ENCODE measurements at regions of chr4 and their contacts with region 1.

Region 1: DNA sequence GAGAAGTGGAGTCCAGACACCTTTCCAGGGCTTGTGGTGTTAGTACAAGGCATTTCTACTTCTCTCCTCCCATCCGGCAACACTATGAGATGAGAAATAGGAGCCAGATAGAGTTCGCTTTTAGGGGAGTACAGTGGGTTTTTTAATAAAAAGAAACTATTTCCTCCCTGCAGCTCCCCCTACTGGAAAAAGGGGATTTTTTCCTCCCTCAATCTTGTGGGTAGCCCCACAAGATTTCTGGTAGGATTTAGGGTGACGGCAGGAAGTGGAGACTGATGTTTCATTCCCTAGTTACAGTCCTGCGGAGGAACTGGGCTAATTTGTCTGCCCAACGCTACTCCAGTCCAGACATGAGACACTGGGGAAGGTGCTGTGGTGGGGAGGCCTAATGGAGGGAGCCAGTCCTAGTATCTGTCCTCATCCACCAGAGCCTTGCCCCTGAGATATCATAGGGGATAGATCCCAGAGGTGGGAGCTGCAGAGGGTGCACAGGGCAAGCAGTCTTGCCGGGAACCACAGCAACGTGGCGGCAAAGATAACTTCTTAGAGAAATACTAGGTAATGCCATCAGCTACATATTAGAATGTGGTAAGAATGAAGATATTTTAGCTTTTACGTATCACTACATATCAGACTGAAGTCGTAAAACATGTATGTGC is 45.5 kb upstream of the PRKG2 start:
- DNase-seq: peak; percentile 51 to 75 (median 54)
- H3K4me3 ChIP-seq: no peak overlapping the region
- H3K27ac ChIP-seq: peak overlapping the region; percentile 22 to 56
- H3K4me1 ChIP-seq: peaks cover 0 to 47% (median 22%) of the 10 kb centered on the region in 4 experiments
- H3K27me3 ChIP-seq: no peaks in the 10 kb centered on the region

Region 2: GRCh38 chr4:81272671-81273070 is 12.1 kb after region 1 on chr4:
- CTCF ChIA-PET with region 1: interaction called, 15 read pairs
- POLR2A ChIA-PET with region 1: no interaction called
- DNase-seq: no peak
- H3K4me3 ChIP-seq: no peak overlapping the region
- H3K27ac ChIP-seq: no peak overlapping the region
- H3K4me1 ChIP-seq: peaks cover 0 to 4% (median 0%) of the 10 kb centered on the region in 4 experiments
- H3K27me3 ChIP-seq: no peaks in the 10 kb centered on the region

Region 3: DNA sequence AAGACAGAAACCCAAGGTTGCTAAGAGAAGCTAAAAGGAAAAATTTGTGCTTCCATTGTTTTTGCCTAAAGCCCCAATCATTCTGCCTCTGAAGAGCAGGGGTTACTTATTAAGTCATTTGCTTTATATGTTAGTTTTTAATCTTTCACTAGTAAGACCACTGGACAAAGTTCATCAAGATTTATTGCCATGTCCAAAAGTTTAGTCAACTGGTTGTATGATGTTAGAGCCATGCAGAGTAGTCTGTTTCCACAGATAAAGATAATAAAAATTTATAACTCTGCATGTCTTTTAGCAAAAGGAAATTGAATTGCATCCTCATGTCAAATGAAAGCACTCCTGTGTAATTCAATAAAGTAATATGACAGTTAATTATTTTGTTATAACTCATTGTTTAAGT is 30.2 kb after region 1 on chr4:
- CTCF ChIA-PET with region 1: no interaction called
- POLR2A ChIA-PET with region 1: no interaction called
- DNase-seq: no peak
- H3K4me3 ChIP-seq: no peak overlapping the region
- H3K27ac ChIP-seq: no peak overlapping the region
- H3K4me1 ChIP-seq: no peaks in the 10 kb centered on the region
- H3K27me3 ChIP-seq: no peaks in the 10 kb centered on the region